CD8-positive, alpha-beta T cell (primary cell): ENCODE measurements at regions of chr2 and their contacts with region 1.

Region 1: GRCh38 chr2:134918526-134919340 is at the start of gene CCNT2:
- DNase-seq: peak; percentile 99 to 100 (median 99)
- ATAC-seq: peak; percentile 85
- H3K4me3 ChIP-seq: peak within 1 kb of the TSS; percentile 91 to 96
- H3K4me3 Mint-ChIP-seq: peak within 1 kb of the TSS; percentile 92
- H3K27ac ChIP-seq: peak within 1 kb of the TSS; percentile 97
- H3K27ac Mint-ChIP-seq: peak within 1 kb of the TSS; percentile 97
- H3K4me1 ChIP-seq: peaks cover 44% of the 10 kb centered on the region
- H3K4me1 Mint-ChIP-seq: peaks cover 51% of the 10 kb centered on the region
- H3K27me3 ChIP-seq: no peaks in the 10 kb centered on the region
- H3K27me3 Mint-ChIP-seq: no peaks in the 10 kb centered on the region
- CTCF ChIP-seq: no peak
- total RNA-seq, gene CCNT2: 67.0 to 71.9 TPM

Region 2: GRCh38 chr2:134245340-134245984 is 673.3 kb before region 1 on chr2:
- CTCF ChIA-PET with region 1: no interaction called
- POLR2A ChIA-PET with region 1: no interaction called
- intact Hi-C with region 1: loop called in 1 of 2 experiments (anchors 10 kb)
- DNase-seq: peak; percentile 56 to 86 (median 78)
- ATAC-seq: peak; percentile 59
- H3K4me3 ChIP-seq: peak overlapping the region in 1 of 2 experiments; percentile 4
- H3K4me3 Mint-ChIP-seq: peak overlapping the region; percentile 0
- H3K27ac ChIP-seq: no peak overlapping the region
- H3K27ac Mint-ChIP-seq: peak overlapping the region; percentile 49
- H3K4me1 ChIP-seq: peaks cover 58% of the 10 kb centered on the region
- H3K4me1 Mint-ChIP-seq: peaks cover 88% of the 10 kb centered on the region
- H3K27me3 ChIP-seq: no peaks in the 10 kb centered on the region
- H3K27me3 Mint-ChIP-seq: no peaks in the 10 kb centered on the region
- CTCF ChIP-seq: peak; percentile 85

Region 3: DNA sequence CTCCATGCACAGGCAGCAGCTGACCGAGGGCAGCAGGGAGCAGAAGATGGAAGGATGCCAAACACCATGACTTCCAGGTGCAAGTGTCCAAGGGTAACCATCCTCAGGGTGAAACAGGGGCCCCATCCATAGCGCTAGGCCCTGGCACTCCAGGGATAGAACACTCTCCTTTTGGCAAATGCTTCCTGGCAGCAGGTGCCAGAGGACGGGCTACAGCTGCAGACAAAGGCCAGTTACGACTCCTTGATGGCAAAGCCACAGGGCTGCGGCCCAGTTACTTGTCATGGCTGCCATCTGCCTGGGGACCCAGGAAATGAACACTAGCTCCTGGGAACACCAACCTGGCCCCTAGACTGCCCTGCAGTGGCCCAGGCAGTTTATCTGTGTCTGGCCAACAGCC is 378.8 kb before region 1 on chr2:
- CTCF ChIA-PET with region 1: no interaction called
- POLR2A ChIA-PET with region 1: no interaction called
- intact Hi-C with region 1: no loop called
- DNase-seq: no peak
- ATAC-seq: no peak
- H3K4me3 ChIP-seq: no peak overlapping the region
- H3K4me3 Mint-ChIP-seq: no peak overlapping the region
- H3K27ac ChIP-seq: no peak overlapping the region
- H3K27ac Mint-ChIP-seq: no peak overlapping the region
- H3K4me1 ChIP-seq: no peaks in the 10 kb centered on the region
- H3K4me1 Mint-ChIP-seq: no peaks in the 10 kb centered on the region
- H3K27me3 ChIP-seq: no peaks in the 10 kb centered on the region
- H3K27me3 Mint-ChIP-seq: peaks cover 3% of the 10 kb centered on the region
- CTCF ChIP-seq: no peak

Region 4: GRCh38 chr2:134683561-134684112 is 235.1 kb before region 1 on chr2:
- CTCF ChIA-PET with region 1: no interaction called
- POLR2A ChIA-PET with region 1: interaction called, 3 read pairs
- intact Hi-C with region 1: loop called in 1 of 2 experiments (anchors 5 kb)
- DNase-seq: peak in 1 of 9 experiments; percentile 24
- ATAC-seq: no peak
- H3K4me3 ChIP-seq: no peak overlapping the region
- H3K4me3 Mint-ChIP-seq: no peak overlapping the region
- H3K27ac ChIP-seq: no peak overlapping the region
- H3K27ac Mint-ChIP-seq: no peak overlapping the region
- H3K4me1 ChIP-seq: peaks cover 23% of the 10 kb centered on the region
- H3K4me1 Mint-ChIP-seq: peaks cover 27% of the 10 kb centered on the region
- H3K27me3 ChIP-seq: no peaks in the 10 kb centered on the region
- H3K27me3 Mint-ChIP-seq: peaks cover 8% of the 10 kb centered on the region
- CTCF ChIP-seq: no peak

Region 5: GRCh38 chr2:135531231-135532228 is 612.8 kb after region 1 on chr2 and contains the start of gene R3HDM1:
- CTCF ChIA-PET with region 1: no interaction called
- POLR2A ChIA-PET with region 1: interaction called, 4 read pairs
- intact Hi-C with region 1: loop called (anchors 1 kb)
- DNase-seq: peak; percentile 88 to 99 (median 94)
- ATAC-seq: peak; percentile 75
- H3K4me3 ChIP-seq: peak within 1 kb of the TSS; percentile 74 to 84
- H3K4me3 Mint-ChIP-seq: no peak within 1 kb of the TSS
- H3K27ac ChIP-seq: peak within 1 kb of the TSS; percentile 79 to 91
- H3K27ac Mint-ChIP-seq: no peak within 1 kb of the TSS
- H3K4me1 ChIP-seq: peaks cover 15% of the 10 kb centered on the region
- H3K4me1 Mint-ChIP-seq: peaks cover 29% of the 10 kb centered on the region
- H3K27me3 ChIP-seq: no peaks in the 10 kb centered on the region
- H3K27me3 Mint-ChIP-seq: no peaks in the 10 kb centered on the region
- CTCF ChIP-seq: no peak
- total RNA-seq, gene R3HDM1: 35.3 to 48.2 TPM

Region 6: DNA sequence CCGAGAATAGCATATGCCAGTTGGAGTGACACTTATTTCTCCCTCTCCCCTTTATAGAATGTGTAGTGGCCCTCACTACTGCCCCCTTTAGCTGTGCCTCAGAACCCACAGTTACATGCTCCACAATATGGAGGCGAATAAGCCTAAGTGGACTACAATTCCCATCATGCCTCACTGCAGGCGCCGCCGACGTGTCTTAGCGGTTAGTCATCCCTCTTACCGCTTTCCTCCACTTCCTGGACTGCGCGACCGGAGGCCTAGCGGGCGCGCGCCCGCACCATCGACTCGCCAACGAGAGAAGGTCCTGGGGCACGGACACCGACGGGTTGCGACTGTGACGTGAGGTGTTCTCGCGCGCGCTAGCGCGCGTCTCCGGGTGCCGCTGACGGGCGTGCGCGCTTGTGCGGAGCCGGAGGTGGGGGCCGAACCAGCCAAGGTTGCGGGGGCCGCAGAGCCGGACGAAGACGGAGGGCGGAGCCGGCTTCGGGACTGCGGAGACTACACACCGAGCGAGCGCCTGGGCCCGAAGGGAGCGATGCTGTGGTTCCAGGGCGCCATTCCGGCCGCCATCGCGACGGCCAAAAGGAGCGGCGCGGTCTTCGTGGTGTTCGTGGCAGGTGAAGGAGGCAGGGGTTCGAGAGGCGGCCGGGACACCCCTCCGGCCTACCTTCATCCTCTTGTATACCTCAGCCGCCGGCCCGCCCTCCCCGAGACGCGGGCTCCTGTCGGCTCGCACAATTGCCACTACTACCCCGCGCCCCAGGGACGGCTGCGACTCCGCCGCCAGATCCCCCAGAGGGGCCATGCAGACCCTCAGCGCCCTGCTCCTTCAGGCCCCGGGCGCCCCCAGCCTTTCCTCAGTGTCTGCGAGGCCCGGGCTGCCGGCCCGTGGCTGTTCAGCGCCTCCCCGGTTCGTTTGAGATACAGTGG is 822.9 kb after region 1 on chr2 and contains the start of gene UBXN4:
- CTCF ChIA-PET with region 1: no interaction called
- POLR2A ChIA-PET with region 1: interaction called, 3 read pairs
- intact Hi-C with region 1: loop called (anchors 1 kb)
- DNase-seq: peak; percentile 89 to 99 (median 94)
- ATAC-seq: peak; percentile 87
- H3K4me3 ChIP-seq: peak within 1 kb of the TSS; percentile 69 to 96
- H3K4me3 Mint-ChIP-seq: peak within 1 kb of the TSS; percentile 98
- H3K27ac ChIP-seq: peak within 1 kb of the TSS; percentile 89 to 98
- H3K27ac Mint-ChIP-seq: peak within 1 kb of the TSS; percentile 98
- H3K4me1 ChIP-seq: peaks cover 28% of the 10 kb centered on the region
- H3K4me1 Mint-ChIP-seq: peaks cover 43% of the 10 kb centered on the region
- H3K27me3 ChIP-seq: no peaks in the 10 kb centered on the region
- H3K27me3 Mint-ChIP-seq: no peaks in the 10 kb centered on the region
- CTCF ChIP-seq: no peak
- total RNA-seq, gene UBXN4: 157 to 172 TPM

Region 7: DNA sequence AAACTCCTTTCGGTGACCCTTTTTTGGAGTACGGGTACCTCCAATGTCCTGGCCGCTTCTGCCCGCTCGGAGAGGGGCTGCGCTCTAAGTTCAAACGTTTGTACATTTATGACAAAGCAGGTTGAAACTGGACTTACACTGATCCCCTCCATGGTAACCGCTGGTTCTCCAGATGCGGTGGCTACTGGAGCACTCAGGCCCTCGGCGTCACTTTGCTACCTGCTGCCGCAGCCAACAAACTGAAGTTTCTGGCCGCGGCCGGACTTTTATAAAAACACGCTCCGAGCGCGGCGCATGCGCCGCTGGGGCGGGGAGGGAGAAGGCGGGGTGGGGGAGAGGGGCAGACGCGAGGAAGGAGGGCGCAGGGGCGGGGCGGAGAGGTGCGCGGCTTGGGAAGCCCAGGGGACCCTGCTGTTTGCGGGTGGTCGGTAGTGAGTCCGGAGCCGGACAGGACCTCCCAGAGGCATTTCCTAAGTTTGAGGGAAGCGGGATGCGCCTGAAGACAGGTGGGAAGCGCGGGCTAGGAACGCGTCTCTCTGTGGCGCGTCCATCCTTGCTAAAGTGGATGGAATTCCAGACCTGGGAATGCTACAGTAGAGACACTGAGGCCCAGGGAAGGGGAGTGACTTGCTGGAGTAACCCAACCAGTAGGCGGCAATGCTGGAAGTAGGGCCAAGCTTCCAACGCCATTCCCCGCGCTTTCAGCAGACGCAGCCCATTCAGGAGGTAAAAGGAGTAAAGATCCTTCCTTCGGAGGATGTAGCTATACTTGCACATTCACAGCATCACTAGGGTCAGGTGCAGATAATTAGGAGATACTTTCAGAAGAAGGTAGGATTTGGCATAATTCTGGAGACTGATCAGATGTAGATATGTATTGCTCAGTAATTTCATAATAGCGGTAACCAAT is 1199.4 kb after region 1 on chr2 and contains the start of gene CXCR4:
- CTCF ChIA-PET with region 1: no interaction called
- POLR2A ChIA-PET with region 1: no interaction called
- intact Hi-C with region 1: loop called in 1 of 2 experiments (anchors 5 kb)
- DNase-seq: peak; percentile 92 to 99 (median 94)
- ATAC-seq: peak; percentile 35
- H3K4me3 ChIP-seq: peak within 1 kb of the TSS; percentile 77 to 83
- H3K4me3 Mint-ChIP-seq: peak within 1 kb of the TSS; percentile 97
- H3K27ac ChIP-seq: peak within 1 kb of the TSS; percentile 87 to 100
- H3K27ac Mint-ChIP-seq: peak within 1 kb of the TSS; percentile 100
- H3K4me1 ChIP-seq: peaks cover 60% of the 10 kb centered on the region
- H3K4me1 Mint-ChIP-seq: peaks cover 64% of the 10 kb centered on the region
- H3K27me3 ChIP-seq: no peaks in the 10 kb centered on the region
- H3K27me3 Mint-ChIP-seq: no peaks in the 10 kb centered on the region
- CTCF ChIP-seq: no peak
- total RNA-seq, gene CXCR4: 2,159 to 2,188 TPM